ENCODE measurements at regions of chr1 and their contacts with region 1.

Region 1: DNA sequence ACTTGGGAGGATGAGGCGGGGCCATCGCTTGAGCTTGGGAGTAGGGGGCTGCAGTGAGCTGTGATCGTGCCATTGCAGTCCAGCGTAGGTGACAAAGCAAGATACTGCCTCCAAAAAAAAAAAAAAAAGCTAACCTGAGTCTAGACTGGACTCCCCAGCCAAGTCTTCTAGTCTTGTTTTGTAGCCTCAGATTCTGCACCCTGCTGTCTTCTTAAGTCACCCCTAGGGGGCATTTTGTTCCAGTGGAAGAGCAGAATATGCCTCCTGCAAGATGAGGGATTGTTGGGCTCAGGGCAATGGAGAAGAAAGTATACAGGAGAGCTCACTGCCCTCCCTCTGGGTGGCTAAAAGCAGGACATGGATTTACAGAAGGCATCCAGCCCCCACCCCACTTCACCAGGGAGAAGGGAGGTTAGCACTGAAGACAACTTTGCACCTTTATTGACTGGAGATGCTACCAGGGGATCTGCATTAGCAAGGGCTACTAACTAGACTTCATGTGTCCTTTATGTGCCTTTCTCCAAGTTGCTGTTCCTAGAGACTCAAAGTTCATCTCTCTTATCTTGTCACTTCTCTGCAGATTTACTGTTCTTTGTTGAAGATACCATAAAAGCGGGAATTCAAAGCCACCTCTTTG is 15.3 kb upstream of the RNF187 start:
- DNase-seq: no peak
- H3K4me3 Mint-ChIP-seq: no peak overlapping the region
- H3K27ac Mint-ChIP-seq: peak overlapping the region; percentile 14
- H3K4me1 Mint-ChIP-seq: peaks cover 33% of the 10 kb centered on the region
- H3K27me3 Mint-ChIP-seq: peaks cover 18% of the 10 kb centered on the region

Region 2: GRCh38 chr1:228486596-228487335 is 14.9 kb after region 1 on chr1:
- intact Hi-C with region 1: loop called (anchors 1 kb)
- DNase-seq: peak; percentile 84
- H3K4me3 Mint-ChIP-seq: peak overlapping the region; percentile 97
- H3K27ac Mint-ChIP-seq: peak overlapping the region; percentile 99
- H3K4me1 Mint-ChIP-seq: peaks cover 29% of the 10 kb centered on the region
- H3K27me3 Mint-ChIP-seq: peaks cover 7% of the 10 kb centered on the region

Region 3: DNA sequence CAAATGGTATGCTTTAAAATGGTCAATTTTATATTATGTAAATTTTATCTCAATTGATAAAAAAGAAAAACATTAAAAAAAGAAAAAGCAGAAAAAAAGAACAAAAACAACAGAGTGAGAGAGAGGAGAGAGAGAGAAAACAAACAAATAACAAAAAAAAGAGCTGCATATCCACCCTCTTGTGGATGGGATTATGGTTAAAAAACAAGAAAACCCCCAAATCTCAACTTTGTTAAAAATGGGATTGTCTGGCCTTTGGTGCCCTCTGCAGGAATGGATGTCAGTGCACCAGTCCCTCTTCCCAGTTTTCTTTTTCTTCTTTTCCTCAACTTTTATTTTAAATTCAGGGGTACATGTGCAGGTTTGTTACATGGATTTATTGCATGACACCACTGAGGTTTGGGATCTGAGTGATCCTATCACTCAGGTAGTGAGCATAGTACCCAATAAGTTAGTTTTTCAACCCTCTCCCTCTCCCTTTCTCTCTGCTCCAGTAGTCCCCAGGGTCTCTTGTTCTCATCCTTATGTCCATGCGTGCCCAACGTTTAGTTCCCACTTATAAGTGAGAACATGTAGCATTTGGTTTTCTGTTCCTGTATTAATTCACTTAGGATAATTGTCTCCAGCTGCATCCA is 43.4 kb after region 1 on chr1:
- intact Hi-C with region 1: loop called (anchors 1 kb)
- DNase-seq: no peak
- H3K4me3 Mint-ChIP-seq: no peak overlapping the region
- H3K27ac Mint-ChIP-seq: no peak overlapping the region
- H3K4me1 Mint-ChIP-seq: peaks cover 6% of the 10 kb centered on the region
- H3K27me3 Mint-ChIP-seq: peaks cover 19% of the 10 kb centered on the region